Spleen (tissue), 13 donors: ENCODE measurements at regions of chr7 and their contacts with region 1.

Region 1: GRCh38 chr7:11427686-11428273 is 404.2 kb downstream of the THSD7A start:
- DNase-seq: no peak
- H3K4me3 ChIP-seq: no peak overlapping the region
- H3K27ac ChIP-seq: no peak overlapping the region
- H3K4me1 ChIP-seq: no peaks in the 10 kb centered on the region
- H3K27me3 ChIP-seq: no peaks in the 10 kb centered on the region
- CTCF ChIP-seq: peak in 9 of 11 experiments; percentile 20 to 66 (median 56)
- POLR2A ChIP-seq: no peak

Region 2: DNA sequence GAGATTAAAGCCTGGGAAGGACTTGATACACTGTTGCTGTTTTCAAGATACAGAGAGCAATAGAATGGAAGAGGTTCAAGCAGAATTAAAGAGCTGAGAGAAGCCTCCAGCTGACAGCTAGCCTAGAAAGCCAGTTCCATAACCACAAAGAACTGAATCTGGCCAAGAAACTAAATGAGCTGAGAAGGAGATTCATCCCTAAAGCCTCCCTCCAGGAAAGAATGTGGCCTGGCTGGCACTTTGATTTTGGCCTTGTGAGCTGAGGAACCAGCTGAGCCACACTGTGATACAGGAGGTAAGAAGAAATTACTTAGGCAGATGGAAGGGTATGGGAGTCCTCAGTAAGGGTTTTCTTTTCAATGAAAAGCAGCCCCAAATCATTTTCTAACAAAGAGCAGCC is 130.0 kb before region 1 on chr7:
- intact Hi-C with region 1: no loop called
- DNase-seq: no peak
- H3K4me3 ChIP-seq: no peak overlapping the region
- H3K27ac ChIP-seq: no peak overlapping the region
- H3K4me1 ChIP-seq: no peaks in the 10 kb centered on the region
- H3K27me3 ChIP-seq: no peaks in the 10 kb centered on the region
- CTCF ChIP-seq: no peak
- POLR2A ChIP-seq: no peak

Region 3: DNA sequence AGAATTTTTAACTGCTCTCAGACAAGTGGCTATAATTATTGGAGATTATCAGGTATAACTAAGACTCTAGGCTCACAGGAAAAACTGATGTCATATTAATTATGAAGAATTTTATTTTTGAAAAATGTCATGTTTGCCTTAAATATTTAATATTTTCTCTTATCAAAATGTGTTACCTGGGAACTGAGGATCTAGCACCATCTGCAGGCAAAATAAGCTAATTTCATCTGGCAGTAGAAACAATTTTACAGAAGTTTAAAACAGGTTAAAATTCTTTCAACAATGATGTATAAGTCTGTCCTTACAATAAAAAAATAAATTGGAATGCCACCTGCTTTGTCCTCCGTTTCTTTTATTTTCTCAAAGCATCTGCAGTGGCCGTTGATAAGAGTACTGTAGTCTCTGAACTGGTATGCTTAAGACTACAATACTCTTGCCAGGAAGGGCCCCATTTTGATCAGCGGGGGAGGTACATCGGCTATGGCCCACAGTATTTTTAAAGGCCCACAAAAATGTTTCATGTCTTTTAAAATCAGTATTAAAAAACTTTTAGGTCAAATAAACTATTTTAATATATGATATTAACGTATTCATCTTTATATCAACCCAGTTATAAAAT is 894.6 kb after region 1 on chr7:
- intact Hi-C with region 1: loop called (anchors 10 kb)
- DNase-seq: no peak
- H3K4me3 ChIP-seq: no peak overlapping the region
- H3K27ac ChIP-seq: no peak overlapping the region
- H3K4me1 ChIP-seq: no peaks in the 10 kb centered on the region
- H3K27me3 ChIP-seq: no peaks in the 10 kb centered on the region
- CTCF ChIP-seq: peak; percentile 30 to 66 (median 60)
- POLR2A ChIP-seq: no peak

Region 4: GRCh38 chr7:12490117-12490688 is 1062.4 kb after region 1 on chr7:
- intact Hi-C with region 1: loop called (anchors 10 kb)
- DNase-seq: no peak
- H3K4me3 ChIP-seq: no peak overlapping the region
- H3K27ac ChIP-seq: no peak overlapping the region
- H3K4me1 ChIP-seq: no peaks in the 10 kb centered on the region
- H3K27me3 ChIP-seq: no peaks in the 10 kb centered on the region
- CTCF ChIP-seq: peak in 9 of 11 experiments; percentile 11 to 56 (median 42)
- POLR2A ChIP-seq: no peak